Activated CD4-positive, alpha-beta T cell treated with anti-CD3 and anti-CD28 coated beads, Interleukin-2, amount 10 ng/mL, durations not matched to agents 24 days and 14 days (primary cell): ENCODE measurements at regions of chr5 and their contacts with region 1.

Region 1: GRCh38 chr5:163306421-163306820 is 131.0 kb upstream of the CCNG1 start:
- DNase-seq: no peak
- H3K4me3 Mint-ChIP-seq: no peak overlapping the region
- H3K27ac Mint-ChIP-seq: no peak overlapping the region
- H3K4me1 Mint-ChIP-seq: peaks cover 9% of the 10 kb centered on the region
- H3K27me3 Mint-ChIP-seq: peaks cover 6% of the 10 kb centered on the region

Region 2: DNA sequence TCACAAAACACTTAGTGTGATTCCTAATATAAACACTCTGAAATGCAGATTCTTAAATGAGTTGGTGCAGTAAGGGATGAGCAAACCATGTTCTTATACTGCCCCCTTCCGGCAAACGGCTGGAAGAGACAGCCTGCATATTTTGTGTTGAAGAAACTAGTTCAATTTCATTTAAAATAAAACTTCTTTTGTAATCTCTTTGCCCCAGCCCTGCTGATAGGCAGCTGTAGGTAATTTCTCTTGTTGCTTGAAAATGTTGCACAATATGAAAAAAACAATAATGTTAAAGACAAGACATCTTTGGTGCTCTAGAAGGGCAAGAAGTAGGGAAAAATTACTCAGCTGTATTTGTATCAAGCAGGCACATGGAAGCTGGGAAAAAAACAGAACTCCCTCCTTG is 41.2 kb after region 1 on chr5:
- intact Hi-C with region 1: loop called (anchors 1 kb)
- DNase-seq: peak; percentile 87
- H3K4me3 Mint-ChIP-seq: no peak overlapping the region
- H3K27ac Mint-ChIP-seq: no peak overlapping the region
- H3K4me1 Mint-ChIP-seq: no peaks in the 10 kb centered on the region
- H3K27me3 Mint-ChIP-seq: peaks cover 3% of the 10 kb centered on the region

Region 3: GRCh38 chr5:163408311-163408923 is 102.0 kb after region 1 on chr5:
- intact Hi-C with region 1: loop called (anchors 5 kb)
- DNase-seq: peak; percentile 84
- H3K4me3 Mint-ChIP-seq: no peak overlapping the region
- H3K27ac Mint-ChIP-seq: no peak overlapping the region
- H3K4me1 Mint-ChIP-seq: peaks cover 5% of the 10 kb centered on the region
- H3K27me3 Mint-ChIP-seq: peaks cover 8% of the 10 kb centered on the region

Region 4: DNA sequence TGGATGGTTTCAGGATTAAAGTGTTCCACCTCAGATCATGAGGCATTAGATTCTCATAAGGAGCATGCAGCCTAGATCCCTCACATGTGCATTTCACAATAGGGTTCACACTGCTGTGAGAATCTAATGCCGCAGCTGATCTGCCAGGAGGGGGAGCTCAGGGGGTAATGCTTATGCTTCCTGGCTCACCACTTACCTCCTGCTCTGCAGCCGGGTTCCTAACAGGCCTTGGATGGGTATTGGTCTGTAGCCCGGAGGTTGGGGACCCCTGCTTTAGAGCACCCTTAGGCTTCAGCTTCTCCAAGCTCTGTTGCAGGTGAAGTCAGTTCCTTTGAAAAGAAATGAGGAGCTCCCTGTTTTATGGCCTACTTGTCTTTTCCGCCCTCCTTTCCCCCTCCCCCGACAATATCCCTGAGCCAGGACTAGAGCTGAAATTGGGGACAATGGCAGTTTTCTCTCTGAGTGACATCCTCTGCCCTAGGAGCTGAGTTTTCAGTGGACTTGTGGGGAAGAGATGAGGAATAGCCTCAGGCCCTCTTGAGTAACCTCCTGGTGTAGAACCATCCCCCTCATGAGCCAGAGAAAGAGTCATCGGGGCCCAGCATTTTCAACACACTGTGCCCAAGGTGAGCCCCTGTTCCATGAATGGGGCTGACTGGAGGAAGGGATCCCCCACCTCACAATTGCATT is 182.8 kb after region 1 on chr5:
- intact Hi-C with region 1: no loop called
- DNase-seq: peak; percentile 73
- H3K4me3 Mint-ChIP-seq: no peak overlapping the region
- H3K27ac Mint-ChIP-seq: peak overlapping the region; percentile 2
- H3K4me1 Mint-ChIP-seq: peaks cover 4% of the 10 kb centered on the region
- H3K27me3 Mint-ChIP-seq: no peaks in the 10 kb centered on the region